CD4-positive, alpha-beta T cell (primary cell): ENCODE measurements at regions of chr4 and their contacts with region 1.

Region 1: GRCh38 chr4:16264798-16265197 is 38.5 kb upstream of the TAPT1 start:
- DNase-seq: peak in 3 of 14 experiments; percentile 57 to 65 (median 64)
- ATAC-seq: no peak
- H3K4me3 ChIP-seq: no peak overlapping the region
- H3K4me3 Mint-ChIP-seq: no peak overlapping the region
- H3K27ac ChIP-seq: no peak overlapping the region
- H3K27ac Mint-ChIP-seq: no peak overlapping the region
- H3K4me1 ChIP-seq: no peaks in the 10 kb centered on the region
- H3K4me1 Mint-ChIP-seq: peaks cover 12% of the 10 kb centered on the region
- H3K27me3 ChIP-seq: no peaks in the 10 kb centered on the region
- H3K27me3 Mint-ChIP-seq: no peaks in the 10 kb centered on the region
- CTCF ChIP-seq: peak; percentile 69

Region 2: DNA sequence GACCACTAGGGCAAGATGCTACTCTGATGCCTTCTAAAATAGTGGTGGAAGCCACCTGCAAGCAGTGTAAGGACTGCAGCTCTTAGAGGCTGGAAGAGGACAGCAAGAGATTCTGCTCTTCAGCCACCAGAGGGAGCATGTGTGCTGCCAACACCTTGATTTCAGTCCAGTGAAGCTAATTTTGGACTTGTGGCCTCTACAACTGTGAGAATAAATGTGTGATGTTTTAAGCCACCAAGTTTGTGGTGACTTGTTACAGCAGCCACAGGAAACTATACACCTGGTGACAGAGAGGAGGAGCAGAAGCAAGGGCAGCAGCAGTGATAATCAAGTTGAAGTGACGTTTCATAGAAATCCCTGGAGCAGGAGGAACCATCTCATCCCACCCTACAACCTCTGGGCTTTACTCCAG is 382.1 kb before region 1 on chr4:
- CTCF ChIA-PET with region 1: no interaction called
- POLR2A ChIA-PET with region 1: no interaction called
- intact Hi-C with region 1: loop called (anchors 2 to 5 kb)
- DNase-seq: peak in 13 of 14 experiments; percentile 11 to 75 (median 22)
- ATAC-seq: peak; percentile 64
- H3K4me3 ChIP-seq: no peak overlapping the region
- H3K4me3 Mint-ChIP-seq: no peak overlapping the region
- H3K27ac ChIP-seq: no peak overlapping the region
- H3K27ac Mint-ChIP-seq: no peak overlapping the region
- H3K4me1 ChIP-seq: no peaks in the 10 kb centered on the region
- H3K4me1 Mint-ChIP-seq: no peaks in the 10 kb centered on the region
- H3K27me3 ChIP-seq: no peaks in the 10 kb centered on the region
- H3K27me3 Mint-ChIP-seq: peaks cover 4% of the 10 kb centered on the region
- CTCF ChIP-seq: peak; percentile 76

Region 3: DNA sequence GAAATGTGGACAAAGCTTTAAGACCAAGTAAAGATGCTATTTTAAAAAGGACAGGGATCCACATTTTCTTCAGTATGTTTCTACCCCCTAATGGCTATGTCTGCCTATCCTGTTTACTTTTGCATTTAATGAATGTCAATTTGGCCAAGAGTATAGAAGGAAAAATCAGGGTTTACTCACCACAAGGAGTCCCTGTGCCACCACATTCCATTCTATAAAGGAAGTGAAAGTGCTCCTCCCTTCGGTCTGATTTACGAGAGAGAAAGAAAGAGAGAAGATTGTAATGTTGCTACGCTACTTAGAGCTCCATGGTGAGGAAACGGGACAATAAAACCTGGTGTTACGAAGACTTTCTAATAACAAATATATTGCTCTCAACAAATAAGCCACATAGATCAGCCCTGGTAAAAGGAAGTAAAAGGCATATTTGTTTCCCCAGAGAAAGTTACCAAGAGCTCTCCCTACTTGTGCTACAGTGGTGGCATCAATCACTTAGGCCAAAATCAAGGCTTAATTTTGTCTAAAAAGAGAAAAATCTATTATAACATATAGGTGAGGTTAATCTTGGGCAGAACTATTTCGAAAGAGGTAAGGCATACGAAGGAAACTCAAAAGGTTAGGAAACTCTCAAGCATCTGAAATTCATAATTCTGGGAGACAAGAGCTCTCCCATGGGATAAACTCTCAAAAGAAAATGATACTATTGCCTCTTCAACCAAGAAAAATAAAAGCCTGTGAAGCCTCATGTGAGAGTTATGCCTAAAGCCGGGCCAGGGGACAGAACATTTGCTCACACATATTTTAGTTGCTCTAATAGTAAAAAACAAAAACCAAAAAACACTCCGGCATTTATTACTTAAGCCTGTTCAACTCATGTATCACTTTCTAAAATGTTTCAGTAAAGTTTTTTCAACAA is 68.1 kb before region 1 on chr4:
- CTCF ChIA-PET with region 1: interaction called, 3 read pairs
- POLR2A ChIA-PET with region 1: no interaction called
- intact Hi-C with region 1: loop called (anchors 2 to 10 kb)
- DNase-seq: peak in 3 of 14 experiments; percentile 14 to 46 (median 39)
- ATAC-seq: peak; percentile 68
- H3K4me3 ChIP-seq: no peak overlapping the region
- H3K4me3 Mint-ChIP-seq: peak overlapping the region; percentile 3
- H3K27ac ChIP-seq: no peak overlapping the region
- H3K27ac Mint-ChIP-seq: peak overlapping the region; percentile 16
- H3K4me1 ChIP-seq: peaks cover 3% of the 10 kb centered on the region
- H3K4me1 Mint-ChIP-seq: peaks cover 47% of the 10 kb centered on the region
- H3K27me3 ChIP-seq: no peaks in the 10 kb centered on the region
- H3K27me3 Mint-ChIP-seq: no peaks in the 10 kb centered on the region
- CTCF ChIP-seq: no peak